Activated CD8-positive, alpha-beta T cell treated with anti-CD3 and anti-CD28 coated beads for 36 hours (primary cell): ENCODE measurements at regions of chr20 and their contacts with region 1.

Region 1: GRCh38 chr20:38623061-38623460 is 21.5 kb downstream of the ARHGAP40 start:
- DNase-seq: no peak
- ATAC-seq: no peak
- H3K4me3 Mint-ChIP-seq: no peak overlapping the region
- H3K27ac Mint-ChIP-seq: no peak overlapping the region
- H3K4me1 Mint-ChIP-seq: no peaks in the 10 kb centered on the region
- H3K27me3 Mint-ChIP-seq: peaks cover 9% of the 10 kb centered on the region
- CTCF ChIP-seq: no peak

Region 2: DNA sequence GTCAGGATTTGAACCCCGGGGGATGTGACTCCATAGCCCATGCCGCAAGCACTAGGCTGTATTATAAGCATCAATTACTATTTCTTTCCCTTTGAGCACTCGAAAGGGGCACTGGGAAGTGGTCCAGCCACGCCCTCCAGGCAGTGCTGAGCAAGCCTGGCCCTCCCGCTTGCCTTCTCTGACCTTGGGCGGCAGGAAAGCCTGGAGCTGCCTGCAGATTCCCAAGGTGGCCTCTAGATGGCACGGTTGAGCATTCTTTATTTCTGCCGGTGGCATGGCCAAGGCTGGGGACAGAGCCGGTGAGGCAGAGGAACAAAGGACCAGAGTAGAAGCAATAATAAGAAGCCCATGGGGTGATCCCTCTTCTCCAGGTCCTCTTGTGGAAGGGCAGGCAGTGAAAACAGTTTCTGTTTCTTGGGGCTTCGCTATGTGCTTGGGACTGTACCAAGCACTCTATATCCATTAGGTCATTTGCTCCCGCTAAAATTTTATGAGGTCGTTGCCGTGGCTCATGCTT is 10.6 kb after region 1 on chr20:
- CTCF ChIA-PET with region 1: interaction called, 13 read pairs
- POLR2A ChIA-PET with region 1: no interaction called
- intact Hi-C with region 1: no loop called
- DNase-seq: peak; percentile 75
- ATAC-seq: peak; percentile 99
- H3K4me3 Mint-ChIP-seq: no peak overlapping the region
- H3K27ac Mint-ChIP-seq: no peak overlapping the region
- H3K4me1 Mint-ChIP-seq: peaks cover 8% of the 10 kb centered on the region
- H3K27me3 Mint-ChIP-seq: peaks cover 7% of the 10 kb centered on the region
- CTCF ChIP-seq: peak; percentile 95